ENCODE measurements at regions of chr6 and their contacts with region 1.

Region 1: DNA sequence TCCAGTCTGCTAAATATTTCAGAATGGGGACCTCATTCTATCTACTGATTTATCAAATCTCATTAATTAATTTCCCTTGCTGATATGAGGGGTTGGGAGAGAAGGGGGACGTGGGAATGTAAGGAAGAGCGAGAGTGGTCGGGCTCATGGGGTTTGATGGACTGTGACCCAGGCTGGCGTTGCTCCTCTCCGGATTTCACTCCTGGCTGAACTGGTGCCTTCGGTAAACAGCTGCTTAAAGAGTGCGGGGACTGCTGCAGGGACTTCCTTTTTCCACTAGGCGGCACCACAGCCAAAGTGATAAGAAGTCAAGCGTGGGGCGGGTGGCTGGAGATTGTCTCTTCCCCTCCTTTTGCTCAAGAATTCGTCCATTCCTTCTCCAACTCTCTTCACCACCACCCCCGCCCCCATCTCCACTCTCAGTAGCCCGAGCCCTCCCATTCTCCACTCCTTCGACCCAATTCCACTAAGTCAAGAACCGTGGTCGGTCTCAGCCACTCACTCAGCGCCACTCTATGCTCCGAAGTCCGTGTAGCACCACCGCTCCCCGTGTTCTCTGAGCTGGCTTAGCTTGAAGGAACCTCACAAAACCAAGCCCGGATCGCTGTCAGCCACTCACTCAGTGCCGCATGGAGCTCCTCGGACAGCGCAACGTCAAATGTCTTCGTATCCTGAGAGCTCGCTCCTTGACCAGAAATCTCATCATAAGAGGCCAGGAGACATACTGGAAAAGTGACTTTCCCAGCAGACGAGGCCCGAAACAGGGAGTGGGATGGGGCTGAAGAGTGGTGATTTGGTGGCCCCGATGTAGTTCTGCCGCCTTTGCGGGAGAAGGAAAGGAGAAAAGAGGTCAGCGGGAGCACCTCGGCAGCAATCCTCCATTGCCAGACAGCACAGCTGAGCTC is 9.7 kb downstream of the TRIM31 start:
- DNase-seq: peak; percentile 92
- ATAC-seq: peak; percentile 90
- H3K4me3 Mint-ChIP-seq: peak overlapping the region; percentile 75
- H3K27ac Mint-ChIP-seq: no peak overlapping the region
- H3K4me1 Mint-ChIP-seq: peaks cover 36% of the 10 kb centered on the region
- H3K27me3 Mint-ChIP-seq: peaks cover 53% of the 10 kb centered on the region
- CTCF ChIP-seq: peak; percentile 86

Region 2: GRCh38 chr6:29051680-29052079 is 1051.5 kb before region 1 on chr6:
- CTCF ChIA-PET with region 1: no interaction called
- POLR2A ChIA-PET with region 1: no interaction called
- intact Hi-C with region 1: no loop called
- DNase-seq: no peak
- ATAC-seq: no peak
- H3K4me3 Mint-ChIP-seq: no peak overlapping the region
- H3K27ac Mint-ChIP-seq: no peak overlapping the region
- H3K4me1 Mint-ChIP-seq: no peaks in the 10 kb centered on the region
- H3K27me3 Mint-ChIP-seq: peaks cover 23% of the 10 kb centered on the region
- CTCF ChIP-seq: no peak

Region 3: DNA sequence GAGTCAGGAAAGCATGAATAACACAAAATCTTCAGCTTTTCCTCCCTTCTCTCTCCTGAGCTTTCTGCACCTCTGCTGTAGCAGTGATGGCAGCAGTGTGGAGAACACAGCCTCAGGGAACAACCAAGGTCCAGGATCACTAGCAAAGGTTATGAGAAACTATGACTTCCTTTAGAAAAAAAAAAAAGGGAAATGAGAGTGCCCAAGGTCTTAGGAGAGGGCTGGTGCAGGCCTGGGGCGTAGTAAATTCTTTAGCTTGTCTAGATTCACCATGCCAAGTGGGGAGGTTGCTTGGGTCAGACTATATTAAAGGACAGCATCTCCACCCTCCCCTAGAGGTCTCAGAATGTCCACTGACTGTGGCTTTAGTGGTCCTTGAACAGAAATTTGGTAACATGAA is 82.6 kb before region 1 on chr6:
- CTCF ChIA-PET with region 1: no interaction called
- POLR2A ChIA-PET with region 1: no interaction called
- intact Hi-C with region 1: no loop called
- DNase-seq: no peak
- ATAC-seq: no peak
- H3K4me3 Mint-ChIP-seq: no peak overlapping the region
- H3K27ac Mint-ChIP-seq: no peak overlapping the region
- H3K4me1 Mint-ChIP-seq: no peaks in the 10 kb centered on the region
- H3K27me3 Mint-ChIP-seq: no peaks in the 10 kb centered on the region
- CTCF ChIP-seq: no peak

Region 4: DNA sequence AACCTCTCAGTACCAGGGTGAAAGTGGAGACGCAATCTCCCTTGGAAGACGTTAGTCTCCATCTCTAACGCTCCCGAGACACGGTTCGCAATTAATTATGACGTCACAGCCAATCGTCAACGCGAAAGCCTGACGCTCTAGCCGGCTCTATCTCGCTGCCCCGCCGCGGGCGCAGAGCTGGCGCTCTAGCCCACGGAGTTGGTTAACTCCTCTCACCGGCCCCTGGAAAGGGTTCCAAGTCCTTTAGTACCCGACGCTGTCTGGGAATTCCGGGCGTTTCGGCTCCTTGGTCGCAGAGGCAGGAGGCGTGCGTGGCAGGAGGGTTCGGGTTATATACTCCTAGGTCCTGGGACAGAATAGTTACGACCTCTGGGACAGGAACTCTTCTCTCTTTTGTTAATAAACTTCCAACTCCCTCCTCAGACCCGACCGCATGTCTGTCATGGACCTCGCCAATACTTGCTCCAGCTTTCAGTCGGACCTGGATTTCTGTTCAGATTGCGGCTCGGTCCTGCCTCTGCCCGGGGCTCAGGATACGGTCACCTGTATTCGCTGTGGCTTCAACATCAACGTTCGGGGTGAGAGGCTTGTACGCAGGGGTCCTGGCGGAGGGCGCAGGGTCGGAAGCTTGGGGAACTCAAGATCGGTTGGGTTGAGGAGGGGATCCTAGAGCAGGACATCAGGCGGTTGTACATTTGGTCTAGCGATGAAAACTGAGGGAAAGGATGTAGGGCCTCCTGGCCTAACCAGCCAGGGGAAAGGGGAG is 41.9 kb before region 1 on chr6 and contains the start of gene POLR1H:
- CTCF ChIA-PET with region 1: interaction called, 11 read pairs
- POLR2A ChIA-PET with region 1: interaction called, 5 read pairs
- intact Hi-C with region 1: no loop called
- DNase-seq: peak; percentile 92
- ATAC-seq: peak; percentile 87
- H3K4me3 Mint-ChIP-seq: peak within 1 kb of the TSS; percentile 92
- H3K27ac Mint-ChIP-seq: peak within 1 kb of the TSS; percentile 99
- H3K4me1 Mint-ChIP-seq: peaks cover 33% of the 10 kb centered on the region
- H3K27me3 Mint-ChIP-seq: no peaks in the 10 kb centered on the region
- CTCF ChIP-seq: no peak
- total RNA-seq, gene POLR1H: 53.0 to 58.1 TPM

Region 5: GRCh38 chr6:30075161-30075986 is 27.8 kb before region 1 on chr6 and contains the start of gene RNF39:
- CTCF ChIA-PET with region 1: interaction called, 11 read pairs
- POLR2A ChIA-PET with region 1: no interaction called
- intact Hi-C with region 1: no loop called
- DNase-seq: peak; percentile 40
- ATAC-seq: no peak
- H3K4me3 Mint-ChIP-seq: peak within 1 kb of the TSS; percentile 42
- H3K27ac Mint-ChIP-seq: no peak within 1 kb of the TSS
- H3K4me1 Mint-ChIP-seq: peaks cover 30% of the 10 kb centered on the region
- H3K27me3 Mint-ChIP-seq: peaks cover 58% of the 10 kb centered on the region
- CTCF ChIP-seq: peak; percentile 57
- total RNA-seq, gene RNF39: not detected

Region 6: DNA sequence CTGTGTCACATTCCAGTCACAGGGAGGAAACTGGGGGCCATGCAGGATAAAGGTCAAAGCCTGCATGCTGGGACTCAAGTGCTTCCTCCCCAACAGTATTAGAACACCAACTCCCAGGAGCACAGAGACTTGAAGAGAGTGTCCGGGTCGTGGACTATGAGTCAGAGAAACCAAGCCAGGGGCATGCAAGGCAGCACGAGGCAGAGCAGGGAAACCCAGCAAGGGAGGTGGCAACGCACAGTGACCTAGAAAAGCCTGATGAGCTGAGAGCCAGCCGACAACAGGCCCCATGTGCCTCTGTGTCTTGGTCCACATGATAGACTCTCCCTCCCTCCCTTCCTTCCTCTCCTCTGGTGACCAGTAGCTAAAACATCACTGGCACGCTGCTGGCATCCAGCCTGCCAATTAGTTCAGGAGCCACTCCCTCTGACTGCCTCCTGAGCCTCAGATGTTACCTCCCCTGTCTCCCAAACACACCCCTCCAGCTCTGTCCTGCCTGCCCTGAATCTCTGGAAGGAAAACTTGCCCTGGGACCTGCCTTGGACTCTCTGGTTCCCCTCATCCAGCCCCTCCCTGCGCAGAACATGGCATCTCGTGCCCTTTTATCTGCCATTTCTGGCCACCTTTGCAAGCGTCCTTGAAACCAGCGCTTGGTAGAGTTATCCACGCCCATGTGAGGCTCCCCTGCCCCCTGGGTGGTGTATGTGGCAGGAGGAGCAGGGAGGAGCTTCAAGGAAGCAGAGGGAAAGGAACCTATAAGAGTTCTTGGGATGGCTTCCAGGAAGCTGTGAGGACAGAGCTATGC is 11.4 kb before region 1 on chr6:
- CTCF ChIA-PET with region 1: interaction called, 17 read pairs
- POLR2A ChIA-PET with region 1: no interaction called
- intact Hi-C with region 1: no loop called
- DNase-seq: no peak
- ATAC-seq: no peak
- H3K4me3 Mint-ChIP-seq: no peak overlapping the region
- H3K27ac Mint-ChIP-seq: no peak overlapping the region
- H3K4me1 Mint-ChIP-seq: no peaks in the 10 kb centered on the region
- H3K27me3 Mint-ChIP-seq: peaks cover 50% of the 10 kb centered on the region
- CTCF ChIP-seq: no peak

Region 7: DNA sequence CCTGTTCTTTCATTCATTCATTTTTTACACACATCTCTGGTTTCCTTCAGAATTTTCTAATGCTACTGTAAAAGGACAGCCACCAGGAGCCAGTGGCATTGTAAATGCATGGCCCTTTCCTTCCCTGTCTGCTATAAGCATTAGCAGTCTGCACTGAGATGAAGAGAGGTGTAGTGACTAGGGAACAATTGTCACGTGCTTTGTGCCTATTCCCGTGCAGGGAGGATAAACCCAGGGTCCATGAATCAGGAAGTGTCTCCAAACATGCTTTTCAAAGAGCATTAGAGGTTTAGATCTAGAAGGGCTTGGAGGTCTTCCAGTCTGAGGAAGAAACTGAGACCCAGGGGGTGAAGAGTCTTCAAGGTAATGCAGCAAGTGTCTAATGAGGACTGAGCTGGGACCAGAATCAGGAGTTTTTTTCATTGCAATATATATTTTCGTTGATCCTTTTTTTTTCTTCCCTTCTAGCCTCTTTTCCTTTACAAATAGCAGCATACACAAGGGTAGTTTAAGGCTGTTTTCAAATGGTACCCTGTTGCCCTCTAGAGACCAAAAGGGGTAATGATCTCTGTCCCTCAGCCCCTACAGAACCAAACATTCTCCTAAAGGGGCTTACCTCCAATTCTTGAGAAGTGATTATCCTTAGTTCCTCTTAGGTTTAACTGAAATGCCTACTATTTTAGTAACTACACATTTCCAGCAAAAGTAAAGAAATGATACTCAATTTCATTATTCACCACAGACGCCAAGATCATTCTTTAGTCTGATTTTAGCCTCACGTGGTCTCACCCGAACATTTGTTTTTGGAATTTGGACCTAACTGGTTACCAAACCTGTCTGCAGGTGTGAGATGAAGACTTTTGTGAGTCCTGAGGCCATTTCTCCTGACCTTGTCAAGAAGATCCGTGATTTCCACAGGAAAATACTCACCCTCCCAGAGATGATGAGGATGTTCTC is 66.7 kb after region 1 on chr6:
- CTCF ChIA-PET with region 1: interaction called, 37 read pairs
- POLR2A ChIA-PET with region 1: interaction called, 4 read pairs
- intact Hi-C with region 1: loop called (anchors 2 kb)
- DNase-seq: peak; percentile 22
- ATAC-seq: peak; percentile 87
- H3K4me3 Mint-ChIP-seq: no peak overlapping the region
- H3K27ac Mint-ChIP-seq: no peak overlapping the region
- H3K4me1 Mint-ChIP-seq: peaks cover 12% of the 10 kb centered on the region
- H3K27me3 Mint-ChIP-seq: peaks cover 55% of the 10 kb centered on the region
- CTCF ChIP-seq: peak; percentile 88

Region 8: GRCh38 chr6:30263734-30264133 is 160.5 kb after region 1 on chr6:
- CTCF ChIA-PET with region 1: no interaction called
- POLR2A ChIA-PET with region 1: no interaction called
- intact Hi-C with region 1: no loop called
- DNase-seq: no peak
- ATAC-seq: no peak
- H3K4me3 Mint-ChIP-seq: no peak overlapping the region
- H3K27ac Mint-ChIP-seq: no peak overlapping the region
- H3K4me1 Mint-ChIP-seq: peaks cover 13% of the 10 kb centered on the region
- H3K27me3 Mint-ChIP-seq: no peaks in the 10 kb centered on the region
- CTCF ChIP-seq: no peak